Panc1 (cell line): ENCODE measurements at regions of chr1 and their contacts with region 1.

Region 1: DNA sequence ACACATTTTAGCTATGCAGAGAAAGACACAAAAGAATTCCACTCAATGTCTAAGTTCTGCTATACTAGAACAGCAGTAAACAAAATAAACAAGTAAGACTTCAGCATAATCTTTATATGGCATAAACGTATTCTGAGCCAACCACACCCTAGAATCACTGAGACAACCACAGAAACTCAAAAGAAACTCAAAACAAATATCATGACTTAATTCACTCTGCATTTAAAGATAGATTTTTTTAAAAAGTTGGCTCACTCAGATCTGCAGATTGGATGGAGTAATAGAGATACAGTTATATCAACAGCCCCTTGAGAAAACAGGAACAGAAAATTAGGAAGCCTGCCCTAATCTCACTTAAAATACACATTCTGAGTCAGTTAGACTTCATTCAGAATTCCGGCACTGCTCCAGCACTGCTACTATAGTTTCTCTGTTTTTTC is 95.0 kb downstream of the COL24A1 start:
- DNase-seq: no peak
- ATAC-seq: no peak
- H3K4me3 ChIP-seq: no peak overlapping the region
- H3K27ac ChIP-seq: no peak overlapping the region
- H3K4me1 ChIP-seq: no peaks in the 10 kb centered on the region
- H3K27me3 ChIP-seq: peaks cover 21% of the 10 kb centered on the region
- CTCF ChIP-seq: no peak

Region 2: GRCh38 chr1:84795966-84796600 is 1265.5 kb before region 1 on chr1:
- CTCF ChIA-PET with region 1: no interaction called
- POLR2A ChIA-PET with region 1: interaction called, 15 read pairs
- in situ Hi-C with region 1: no loop called
- intact Hi-C with region 1: no loop called
- DNase-seq: no peak
- ATAC-seq: no peak
- H3K4me3 ChIP-seq: no peak overlapping the region
- H3K27ac ChIP-seq: no peak overlapping the region
- H3K4me1 ChIP-seq: no peaks in the 10 kb centered on the region
- H3K27me3 ChIP-seq: peaks cover 11% of the 10 kb centered on the region
- CTCF ChIP-seq: no peak

Region 3: DNA sequence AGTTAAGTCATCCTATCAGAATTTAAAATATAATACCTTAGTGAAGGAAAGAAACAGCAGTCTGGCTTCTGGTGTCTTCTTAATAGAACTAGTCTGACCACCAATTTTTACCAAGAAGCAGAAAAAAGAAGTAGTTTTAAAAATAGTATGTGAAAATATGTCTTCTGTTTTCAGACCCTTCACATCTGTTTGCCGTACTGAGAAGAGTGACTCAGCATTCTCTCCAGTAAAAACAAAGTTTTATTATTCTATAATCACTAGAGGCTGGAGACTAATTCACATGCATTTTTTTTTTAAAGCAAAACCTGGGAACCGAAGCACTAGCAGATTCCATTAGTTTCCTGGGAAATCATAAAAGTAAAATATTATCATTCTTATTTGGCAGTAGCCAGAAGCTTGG is 68.8 kb before region 1 on chr1:
- CTCF ChIA-PET with region 1: no interaction called
- POLR2A ChIA-PET with region 1: no interaction called
- in situ Hi-C with region 1: no loop called
- intact Hi-C with region 1: no loop called
- DNase-seq: no peak
- ATAC-seq: no peak
- H3K4me3 ChIP-seq: no peak overlapping the region
- H3K27ac ChIP-seq: no peak overlapping the region
- H3K4me1 ChIP-seq: no peaks in the 10 kb centered on the region
- H3K27me3 ChIP-seq: peaks cover 1% of the 10 kb centered on the region; the same call in 1 of the 2 replicates
- CTCF ChIP-seq: no peak

Region 4: GRCh38 chr1:86335916-86336315 is 274.3 kb after region 1 on chr1:
- CTCF ChIA-PET with region 1: interaction called, 16 read pairs
- POLR2A ChIA-PET with region 1: no interaction called
- in situ Hi-C with region 1: no loop called
- intact Hi-C with region 1: no loop called
- DNase-seq: no peak
- ATAC-seq: no peak
- H3K4me3 ChIP-seq: no peak overlapping the region
- H3K27ac ChIP-seq: no peak overlapping the region
- H3K4me1 ChIP-seq: no peaks in the 10 kb centered on the region
- H3K27me3 ChIP-seq: peaks cover 6% of the 10 kb centered on the region; the same call in 1 of the 2 replicates
- CTCF ChIP-seq: no peak